Aorta (tissue), 5 donors: ENCODE measurements at regions of chr12 and their contacts with region 1.

Region 1: DNA sequence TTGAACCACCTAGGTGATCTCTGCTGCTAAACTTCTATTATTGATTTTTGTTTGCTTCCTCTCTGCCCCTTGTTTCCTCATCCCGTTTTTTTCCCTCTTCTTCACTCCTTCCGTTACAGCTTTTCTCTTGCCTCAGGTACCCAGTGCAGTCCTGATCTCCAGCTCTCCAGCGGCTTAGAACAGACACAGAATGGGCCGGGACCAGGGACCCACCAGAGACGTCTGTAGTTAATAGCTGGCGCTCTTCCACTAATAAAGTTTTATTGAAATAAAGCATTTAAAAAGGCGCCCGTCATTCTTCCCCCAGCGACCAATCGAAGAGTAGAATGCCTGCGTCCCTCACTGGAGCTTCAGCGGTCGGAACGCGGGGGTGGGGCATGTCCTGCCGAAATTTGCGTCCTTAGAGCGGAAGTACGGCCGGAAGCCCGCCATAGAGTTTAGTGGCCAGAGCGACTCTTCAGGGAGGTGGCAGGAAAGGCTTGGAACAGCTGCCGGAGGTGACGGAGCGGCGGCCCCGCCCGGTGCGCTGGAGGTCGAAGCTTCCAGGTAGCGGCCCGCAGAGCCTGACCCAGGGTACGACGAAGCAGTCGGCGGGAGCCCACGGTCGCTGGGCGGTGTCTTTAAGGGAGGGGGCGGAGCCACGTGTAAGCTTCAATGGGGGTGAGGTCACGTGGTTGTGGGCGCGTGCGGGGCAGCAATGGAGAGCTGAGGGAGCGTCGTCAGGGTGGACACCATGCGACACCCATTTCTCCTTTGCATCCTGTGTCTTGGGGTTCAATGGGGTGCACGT is at the start of gene COPS7A:
- DNase-seq: peak; percentile 99
- ATAC-seq: peak; percentile 99
- H3K4me3 ChIP-seq: peak within 1 kb of the TSS; percentile 53 to 71
- H3K27ac ChIP-seq: peak within 1 kb of the TSS in 1 of 2 donors; percentile 79
- H3K4me1 ChIP-seq: no peaks in the 10 kb centered on the region
- H3K27me3 ChIP-seq: no peaks in the 10 kb centered on the region
- total RNA-seq, gene COPS7A: 47.0 to 50.1 TPM

Region 2: DNA sequence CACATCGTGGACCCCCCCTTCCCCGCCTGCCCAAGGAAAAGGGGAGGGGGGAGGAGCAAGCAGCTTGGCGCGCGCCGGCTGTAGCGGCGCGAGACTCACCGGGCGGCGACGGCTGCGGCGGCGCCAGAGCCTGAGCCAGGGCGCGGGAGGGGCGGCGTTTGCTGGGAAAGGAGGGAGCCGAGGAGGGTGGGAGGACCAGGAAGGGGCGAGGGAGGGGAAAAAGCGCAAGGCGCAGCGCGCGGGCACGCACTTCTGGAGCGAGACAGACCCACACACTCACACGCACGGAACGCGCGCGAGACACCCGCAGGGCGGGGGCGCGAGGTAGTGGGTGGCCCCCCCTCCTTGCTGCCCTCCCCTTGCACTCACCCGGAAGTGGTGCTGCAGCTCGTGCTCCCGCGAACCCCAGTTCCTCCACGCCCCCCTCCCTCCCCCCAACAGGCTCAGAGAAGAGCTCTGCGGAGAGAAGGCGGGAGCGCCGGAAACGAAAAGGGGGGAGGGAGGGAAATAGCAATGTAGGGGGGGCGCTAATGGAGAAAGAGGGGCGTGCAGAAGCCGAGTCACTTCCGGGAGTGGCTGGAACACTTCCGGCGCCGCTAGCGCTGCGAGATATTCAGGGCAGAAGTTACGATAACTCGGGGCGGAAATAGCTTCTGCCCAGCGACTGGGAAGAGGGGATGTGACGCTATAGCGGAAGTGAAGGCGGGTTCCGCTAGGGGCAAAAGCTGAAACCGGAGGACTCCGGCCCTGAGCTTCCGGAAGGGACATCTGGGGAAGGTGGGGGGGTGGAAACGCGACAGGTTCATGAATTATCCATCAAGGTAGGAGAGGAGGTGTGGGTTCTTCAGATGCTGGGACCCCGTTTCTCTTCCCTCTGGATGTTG is 34.6 kb before region 1 on chr12 and contains the start of gene ZNF384:
- intact Hi-C with region 1: loop called in 1 of 2 experiments (anchors 5 kb)
- DNase-seq: peak; percentile 98
- ATAC-seq: peak; percentile 95
- H3K4me3 ChIP-seq: peak within 1 kb of the TSS; percentile 71 to 81
- H3K27ac ChIP-seq: peak within 1 kb of the TSS; percentile 70 to 79
- H3K4me1 ChIP-seq: no peaks in the 10 kb centered on the region
- H3K27me3 ChIP-seq: no peaks in the 10 kb centered on the region
- total RNA-seq, gene ZNF384: 54.4 to 66.7 TPM